WTC11 (cell line): ENCODE measurements at regions of chr1 and their contacts with region 1.

Region 1: GRCh38 chr1:212608209-212608955 is at the start of gene ATF3:
- DNase-seq: peak; percentile 99
- ATAC-seq: peak; percentile 84
- H3K4me3 Mint-ChIP-seq: peak within 1 kb of the TSS; percentile 89
- H3K27ac Mint-ChIP-seq: peak within 1 kb of the TSS; percentile 49; the same call in 1 of the 2 replicates
- H3K4me1 Mint-ChIP-seq: peaks cover 62% of the 10 kb centered on the region
- H3K27me3 Mint-ChIP-seq: peaks cover 64% of the 10 kb centered on the region
- CTCF ChIP-seq: no peak
- total RNA-seq, gene ATF3: 12.5 to 19.4 TPM (median 14.6 TPM) in 3 replicates

Region 2: DNA sequence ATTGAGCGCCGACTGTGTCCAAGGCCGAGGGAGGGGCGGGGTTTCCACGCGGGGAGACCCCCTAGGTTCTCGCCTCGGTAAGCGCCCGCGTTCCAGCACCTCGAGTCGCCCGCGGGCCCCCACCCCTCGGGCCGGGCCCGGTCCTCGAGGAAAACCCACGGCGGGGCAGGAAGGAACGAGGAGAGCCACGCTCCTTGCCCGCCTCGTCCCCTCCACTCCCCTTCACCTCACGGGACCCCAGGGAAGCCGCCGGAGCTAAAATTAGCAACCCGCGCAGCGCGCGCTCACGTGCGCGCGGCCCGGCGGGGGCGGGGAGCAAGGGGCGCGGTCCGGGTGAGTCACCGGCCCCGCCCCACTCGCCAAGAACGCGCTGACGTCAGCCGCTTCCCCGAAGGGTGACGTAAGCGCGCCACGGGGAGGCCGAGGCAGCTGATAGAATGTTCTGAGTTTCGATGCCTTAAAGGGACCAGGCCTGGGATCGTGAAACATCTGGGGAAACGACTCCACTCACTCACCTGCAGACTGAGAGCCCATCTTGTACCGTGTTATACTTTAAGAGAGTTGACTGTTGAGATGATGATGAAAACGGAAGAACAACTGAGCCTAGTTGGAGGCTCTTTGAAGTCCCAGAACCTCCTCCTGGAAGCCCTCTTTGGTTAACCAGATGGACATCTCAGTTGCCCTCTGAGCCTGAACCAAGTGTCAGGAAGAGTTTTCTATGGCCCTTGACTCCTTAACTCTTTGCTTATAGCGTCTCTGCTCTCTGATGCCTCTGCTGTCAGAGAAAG is 49.5 kb before region 1 on chr1:
- CTCF ChIA-PET with region 1: interaction called, 9 read pairs
- POLR2A ChIA-PET with region 1: interaction called, 52 read pairs
- DNase-seq: peak; percentile 92
- ATAC-seq: peak; percentile 76
- H3K4me3 Mint-ChIP-seq: peak overlapping the region; percentile 70
- H3K27ac Mint-ChIP-seq: peak overlapping the region; percentile 98
- H3K4me1 Mint-ChIP-seq: peaks cover 12% of the 10 kb centered on the region
- H3K27me3 Mint-ChIP-seq: peaks cover 28% of the 10 kb centered on the region
- CTCF ChIP-seq: no peak

Region 3: GRCh38 chr1:212618501-212619405 is 10.4 kb after region 1 on chr1:
- CTCF ChIA-PET with region 1: interaction called, 9 read pairs
- POLR2A ChIA-PET with region 1: interaction called, 12 read pairs
- DNase-seq: no peak
- ATAC-seq: no peak
- H3K4me3 Mint-ChIP-seq: no peak overlapping the region
- H3K27ac Mint-ChIP-seq: no peak overlapping the region
- H3K4me1 Mint-ChIP-seq: peaks cover 16% of the 10 kb centered on the region
- H3K27me3 Mint-ChIP-seq: no peaks in the 10 kb centered on the region
- CTCF ChIP-seq: no peak

Region 4: GRCh38 chr1:212650228-212650627 is 41.8 kb after region 1 on chr1:
- CTCF ChIA-PET with region 1: no interaction called
- POLR2A ChIA-PET with region 1: no interaction called
- DNase-seq: no peak
- ATAC-seq: no peak
- H3K4me3 Mint-ChIP-seq: no peak overlapping the region
- H3K27ac Mint-ChIP-seq: no peak overlapping the region
- H3K4me1 Mint-ChIP-seq: no peaks in the 10 kb centered on the region
- H3K27me3 Mint-ChIP-seq: no peaks in the 10 kb centered on the region; the same call in 1 of the 2 replicates
- CTCF ChIP-seq: no peak

Region 5: DNA sequence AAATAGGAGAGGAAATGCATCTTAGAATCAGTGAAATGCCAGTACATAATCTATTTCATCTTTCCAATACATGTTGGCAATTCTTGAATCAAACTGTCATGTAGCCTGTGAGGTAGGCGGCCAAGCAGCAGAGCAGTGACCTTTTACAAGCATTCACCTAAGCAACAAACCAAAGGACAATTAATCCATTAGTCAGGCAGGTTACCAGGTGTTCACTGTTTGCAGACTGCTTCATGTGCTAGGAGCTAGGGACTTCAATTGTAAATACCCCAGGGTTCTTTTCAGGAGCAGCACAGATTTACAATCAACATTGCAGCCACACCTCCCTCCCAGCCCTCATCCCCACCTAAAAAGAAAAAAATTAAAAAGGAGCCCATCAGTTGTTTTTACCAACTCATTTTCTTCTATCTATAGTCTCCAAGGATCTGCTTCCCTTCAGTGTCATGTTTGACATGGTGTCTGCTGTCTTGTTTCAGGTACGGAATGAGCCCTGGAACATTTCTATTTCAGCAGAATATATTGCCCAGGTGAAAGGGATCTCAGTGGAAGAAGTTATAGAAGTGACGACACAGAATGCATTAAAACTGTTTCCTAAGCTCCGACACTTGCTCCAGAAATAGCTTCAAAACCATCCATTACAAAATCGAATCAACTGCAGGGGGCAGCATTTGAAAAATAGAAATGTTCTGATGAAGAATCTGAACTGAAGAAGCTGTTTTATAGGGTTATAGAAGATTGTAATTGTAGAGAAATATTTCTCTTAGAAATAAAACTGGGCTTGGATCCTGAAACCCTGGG is 206.4 kb after region 1 on chr1:
- CTCF ChIA-PET with region 1: no interaction called
- POLR2A ChIA-PET with region 1: no interaction called
- DNase-seq: no peak
- ATAC-seq: peak; percentile 82
- H3K4me3 Mint-ChIP-seq: no peak overlapping the region
- H3K27ac Mint-ChIP-seq: peak overlapping the region; percentile 69
- H3K4me1 Mint-ChIP-seq: peaks cover 14% of the 10 kb centered on the region
- H3K27me3 Mint-ChIP-seq: no peaks in the 10 kb centered on the region
- CTCF ChIP-seq: no peak